Heart right ventricle (tissue), 16 donors: ENCODE measurements at regions of chr11 and their contacts with region 1.

Region 1: GRCh38 chr11:9861860-9862725 is 198.2 kb downstream of the SWAP70 start:
- DNase-seq: peak; percentile 13 to 39
- ATAC-seq: peak in 7 of 8 donors; percentile 77 to 90 (median 82)
- H3K4me3 ChIP-seq: no peak overlapping the region
- H3K27ac ChIP-seq: no peak overlapping the region
- H3K4me1 ChIP-seq: peaks cover 0 to 19% (median 13%) of the 10 kb centered on the region in 9 donors
- H3K27me3 ChIP-seq: no peaks in the 10 kb centered on the region
- CTCF ChIP-seq: peak; percentile 53 to 85 (median 74)

Region 2: GRCh38 chr11:9895006-9895405 is 32.9 kb after region 1 on chr11:
- intact Hi-C with region 1: no loop called
- DNase-seq: no peak
- ATAC-seq: no peak
- H3K4me3 ChIP-seq: no peak overlapping the region
- H3K27ac ChIP-seq: no peak overlapping the region
- H3K4me1 ChIP-seq: peaks cover 0 to 7% (median 0%) of the 10 kb centered on the region in 9 donors
- H3K27me3 ChIP-seq: no peaks in the 10 kb centered on the region
- CTCF ChIP-seq: no peak

Region 3: GRCh38 chr11:9972989-9973388 is 110.9 kb after region 1 on chr11:
- intact Hi-C with region 1: loop called in 5 of 10 experiments (anchors 5 to 10 kb)
- DNase-seq: peak in 1 of 2 donors; percentile 9
- ATAC-seq: peak; percentile 47 to 82 (median 71)
- H3K4me3 ChIP-seq: no peak overlapping the region
- H3K27ac ChIP-seq: no peak overlapping the region
- H3K4me1 ChIP-seq: peaks cover 0 to 22% (median 16%) of the 10 kb centered on the region in 9 donors
- H3K27me3 ChIP-seq: no peaks in the 10 kb centered on the region
- CTCF ChIP-seq: peak; percentile 40 to 82 (median 72)

Region 4: DNA sequence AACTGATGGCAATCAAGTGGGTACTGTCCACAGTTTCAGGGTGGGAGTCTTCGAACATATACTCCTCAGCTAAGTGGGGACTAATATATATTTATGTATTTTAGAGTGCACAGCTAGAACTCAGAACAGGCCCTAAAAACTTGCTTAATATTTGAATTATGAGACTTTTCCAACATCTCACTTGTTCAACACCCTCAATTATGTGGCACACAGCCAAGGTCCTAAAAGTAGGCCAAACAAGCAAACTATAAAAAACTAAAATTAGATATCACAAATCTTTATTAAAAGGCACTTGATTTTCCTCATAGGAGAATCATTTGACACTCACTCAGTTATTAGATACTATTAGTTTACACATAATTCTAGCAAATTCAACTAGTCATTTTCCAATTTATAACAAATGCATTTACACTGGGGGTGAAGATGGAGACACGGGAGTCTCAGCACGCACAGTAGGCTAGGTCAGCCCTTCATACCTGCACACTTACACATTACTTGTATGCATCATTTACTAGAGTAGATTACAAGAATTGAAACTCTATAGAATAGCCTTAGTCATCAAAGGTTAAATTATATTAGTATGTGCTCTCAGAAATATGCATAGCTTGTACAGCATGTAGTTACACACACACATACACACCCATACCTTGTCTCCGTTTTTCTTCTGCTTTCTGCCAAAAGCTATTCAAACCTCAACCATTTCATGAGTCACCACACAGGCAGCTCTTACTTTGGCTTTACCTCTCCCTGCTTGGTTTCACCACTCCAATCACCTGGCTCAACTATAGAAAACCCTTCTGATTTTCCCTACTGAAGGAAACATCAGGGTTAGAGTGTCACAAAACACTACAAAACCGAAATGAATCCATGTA is 260.5 kb after region 1 on chr11:
- intact Hi-C with region 1: no loop called
- DNase-seq: no peak
- ATAC-seq: peak in 1 of 8 donors; percentile 26
- H3K4me3 ChIP-seq: peak overlapping the region in 1 of 10 donors; percentile 0
- H3K27ac ChIP-seq: peak overlapping the region in 2 of 10 donors; percentile 10 to 33
- H3K4me1 ChIP-seq: peaks cover 0 to 66% (median 44%) of the 10 kb centered on the region in 9 donors
- H3K27me3 ChIP-seq: no peaks in the 10 kb centered on the region
- CTCF ChIP-seq: no peak